AG04450 (cell line): ENCODE measurements at regions of chr5 and their contacts with region 1.

Region 1: DNA sequence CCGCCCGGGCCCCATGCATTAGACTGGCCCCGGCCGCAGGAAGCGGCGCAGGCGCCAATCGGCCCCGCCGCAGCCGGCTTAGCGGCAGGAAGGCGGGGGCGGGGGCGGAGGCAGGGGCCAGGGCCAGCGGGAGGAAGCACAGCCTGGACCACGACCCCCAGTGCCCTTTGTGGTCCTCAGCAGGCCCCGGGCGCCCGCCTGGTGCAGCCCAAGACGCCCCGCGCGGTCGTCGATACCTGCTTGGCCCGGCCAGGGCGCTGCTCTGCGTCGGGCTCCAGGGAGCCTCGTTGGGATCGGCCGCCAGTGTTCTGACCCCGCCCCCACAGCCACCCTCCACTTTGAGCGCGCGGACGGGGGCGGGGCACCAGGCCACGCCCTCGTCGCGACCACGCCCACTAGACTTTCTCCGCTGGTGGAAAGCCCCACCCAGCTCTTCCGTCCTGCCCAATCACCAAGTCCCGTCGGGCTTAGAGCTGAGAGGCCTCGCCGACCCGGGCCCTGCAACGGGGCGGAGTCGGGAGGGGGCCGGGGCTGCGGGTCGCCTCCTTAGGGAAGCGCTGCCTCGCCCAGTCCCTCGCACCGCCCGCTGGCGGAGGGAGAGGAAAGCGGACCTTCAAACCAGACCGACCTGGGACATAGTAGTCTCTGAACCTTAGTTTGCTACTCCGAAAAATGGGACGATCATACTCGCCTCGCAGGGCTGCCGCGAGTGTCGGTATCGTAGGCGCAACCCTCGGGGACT is at the start of gene PDLIM7:
- DNase-seq: peak; percentile 95
- H3K4me3 ChIP-seq: peak within 1 kb of the TSS; percentile 95
- H3K27ac ChIP-seq: peak within 1 kb of the TSS; percentile 99
- H3K27me3 ChIP-seq: no peaks in the 10 kb centered on the region
- CTCF ChIP-seq: peak; percentile 15; the same call in 1 of the 2 replicates
- polyA plus RNA-seq, gene PDLIM7: 195 and 268 TPM in 2 replicates

Region 2: DNA sequence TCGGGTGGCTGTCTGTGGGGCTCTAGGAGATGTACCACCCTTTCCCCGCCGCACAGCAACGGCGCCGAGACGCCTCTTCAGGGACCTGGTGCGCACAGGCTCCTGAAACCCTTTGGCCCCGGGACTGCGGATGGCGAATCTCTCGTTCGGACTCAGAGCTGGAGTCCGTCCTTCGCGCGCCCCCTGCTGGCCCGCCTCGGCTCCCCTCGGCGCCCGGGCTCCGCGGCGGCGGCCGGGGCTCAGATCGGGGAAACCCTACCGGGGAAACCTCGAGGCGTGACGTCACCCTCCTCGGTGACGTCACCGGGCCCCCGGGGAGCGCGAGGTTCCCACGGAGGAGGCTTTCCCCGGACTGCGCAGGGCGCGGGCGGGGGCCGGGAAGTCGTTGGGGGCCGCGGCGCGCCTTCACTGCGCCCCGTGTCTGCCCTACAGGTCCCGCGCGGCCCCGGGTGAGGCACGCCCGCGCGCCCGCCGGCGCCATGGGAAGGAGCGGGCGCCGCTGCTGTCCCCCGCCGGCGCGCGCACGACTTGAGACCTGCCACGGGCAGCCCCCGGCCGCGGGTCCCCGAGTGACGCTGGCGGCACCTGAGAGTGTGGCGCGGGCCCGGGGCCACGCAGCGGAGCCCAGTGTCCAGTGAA is 42.9 kb before region 1 on chr5:
- CTCF ChIA-PET with region 1: interaction called, 16 read pairs
- POLR2A ChIA-PET with region 1: interaction called, 13 read pairs
- DNase-seq: no peak
- H3K4me3 ChIP-seq: peak overlapping the region; percentile 51
- H3K27ac ChIP-seq: peak overlapping the region; percentile 11
- H3K27me3 ChIP-seq: no peaks in the 10 kb centered on the region
- CTCF ChIP-seq: peak; percentile 77

Region 3: DNA sequence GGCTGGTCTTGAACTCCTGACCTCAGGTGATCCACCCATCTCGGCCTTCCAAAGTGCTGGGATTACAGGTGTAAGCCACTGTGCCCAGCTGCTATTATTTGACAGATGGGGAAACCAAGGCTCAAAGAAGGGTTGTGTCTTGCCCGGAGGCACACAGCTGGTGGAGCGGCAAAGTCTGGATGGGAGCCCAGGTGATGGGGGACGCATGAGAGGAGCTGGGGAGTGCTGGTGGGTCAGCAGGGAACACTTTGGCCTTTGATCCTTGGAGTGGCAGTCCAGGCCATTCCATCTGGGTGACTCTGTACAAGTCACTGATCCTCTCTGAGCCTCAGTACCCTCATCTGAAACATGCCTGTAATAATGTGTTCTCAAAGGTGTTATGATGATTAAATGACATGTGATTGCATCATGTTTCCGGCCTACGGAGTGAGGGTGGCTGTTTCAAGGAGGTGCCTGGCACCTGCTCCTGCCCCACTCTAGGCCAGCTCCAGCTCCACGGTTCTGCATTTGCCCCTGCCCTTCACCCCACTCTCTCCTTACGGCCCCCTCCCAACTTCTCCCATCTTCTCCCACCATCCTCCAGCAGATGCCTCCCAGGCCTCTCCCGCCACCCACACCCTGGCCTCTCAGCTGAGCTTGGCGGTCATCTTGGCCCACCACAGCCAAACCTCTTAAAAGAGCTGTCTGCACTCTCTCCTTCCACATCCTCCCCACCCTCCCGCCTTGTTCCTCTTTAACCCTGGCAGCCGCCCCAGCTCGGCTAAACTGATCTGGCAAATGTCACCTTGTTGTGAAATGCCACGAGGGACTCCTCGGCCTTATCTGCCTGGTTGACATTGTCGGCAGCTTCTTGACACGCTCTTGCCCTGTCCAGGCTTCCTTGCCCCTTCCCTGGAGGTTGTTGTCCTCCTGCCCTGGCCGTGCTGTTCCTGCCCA is 18.5 kb before region 1 on chr5:
- CTCF ChIA-PET with region 1: interaction called, 11 read pairs
- POLR2A ChIA-PET with region 1: interaction called, 230 read pairs
- DNase-seq: no peak
- H3K4me3 ChIP-seq: no peak overlapping the region
- H3K27ac ChIP-seq: peak overlapping the region; percentile 77
- H3K27me3 ChIP-seq: no peaks in the 10 kb centered on the region
- CTCF ChIP-seq: no peak

Region 4: DNA sequence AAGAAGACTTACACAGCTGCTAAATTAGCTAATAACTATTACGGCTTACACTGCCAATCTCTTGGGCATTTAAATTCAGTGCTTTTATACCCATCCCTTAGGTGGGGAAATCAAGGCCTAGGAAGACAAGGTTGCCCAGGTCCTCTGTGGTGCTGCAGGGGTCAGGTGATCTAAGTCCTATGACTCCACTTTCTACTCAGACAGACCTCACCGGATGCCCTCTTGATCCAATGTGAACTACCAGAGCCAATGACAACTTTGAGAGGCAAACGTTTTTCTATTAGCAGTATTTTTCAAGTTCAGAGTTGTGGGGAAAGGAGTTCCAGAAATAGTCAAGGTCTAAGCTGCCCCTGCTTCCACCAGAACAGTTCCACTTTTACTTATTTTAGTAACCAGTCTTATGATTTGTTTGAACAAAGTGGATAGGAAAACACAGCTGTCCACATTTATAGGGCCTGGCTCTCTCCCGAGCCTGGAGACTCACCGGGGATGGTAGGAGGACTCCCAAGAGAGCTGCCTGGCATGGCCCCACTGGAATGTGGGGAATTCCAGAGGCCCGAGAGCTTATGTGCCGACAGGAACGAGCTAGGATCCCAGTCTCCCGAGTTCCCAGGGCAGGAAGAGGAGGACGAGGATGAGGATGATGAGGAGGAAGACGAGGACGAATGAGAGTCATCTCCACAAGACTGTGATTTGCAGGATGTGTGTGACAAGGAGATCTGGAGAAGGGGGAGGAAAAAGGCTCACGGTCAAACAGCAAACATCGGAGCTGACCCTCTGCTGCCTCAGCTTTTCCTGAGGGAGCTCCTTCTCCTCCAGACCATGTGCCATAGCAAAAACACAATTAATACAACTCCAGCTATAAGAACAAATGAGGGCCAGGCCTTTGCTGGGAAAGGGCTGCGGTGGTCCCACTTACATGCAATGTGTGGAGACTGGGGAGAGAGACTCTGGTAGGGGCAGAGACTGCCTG is 40.2 kb after region 1 on chr5:
- CTCF ChIA-PET with region 1: interaction called, 15 read pairs
- POLR2A ChIA-PET with region 1: interaction called, 8 read pairs
- DNase-seq: peak; percentile 76
- H3K4me3 ChIP-seq: no peak overlapping the region
- H3K27ac ChIP-seq: peak overlapping the region; percentile 94
- H3K27me3 ChIP-seq: no peaks in the 10 kb centered on the region
- CTCF ChIP-seq: no peak